ENCODE measurements at regions of chr7 and their contacts with region 1.

Region 1: GRCh38 chr7:24336461-24336860 is 52.5 kb downstream of the NPY start:
- DNase-seq: no peak
- ATAC-seq: no peak
- H3K4me3 ChIP-seq: no peak overlapping the region
- H3K27ac ChIP-seq: no peak overlapping the region
- H3K4me1 ChIP-seq: no peaks in the 10 kb centered on the region
- H3K27me3 ChIP-seq: peaks cover 0 to 15% (median 0%) of the 10 kb centered on the region in 9 donors
- CTCF ChIP-seq: no peak
- POLR2A ChIP-seq: no peak

Region 2: DNA sequence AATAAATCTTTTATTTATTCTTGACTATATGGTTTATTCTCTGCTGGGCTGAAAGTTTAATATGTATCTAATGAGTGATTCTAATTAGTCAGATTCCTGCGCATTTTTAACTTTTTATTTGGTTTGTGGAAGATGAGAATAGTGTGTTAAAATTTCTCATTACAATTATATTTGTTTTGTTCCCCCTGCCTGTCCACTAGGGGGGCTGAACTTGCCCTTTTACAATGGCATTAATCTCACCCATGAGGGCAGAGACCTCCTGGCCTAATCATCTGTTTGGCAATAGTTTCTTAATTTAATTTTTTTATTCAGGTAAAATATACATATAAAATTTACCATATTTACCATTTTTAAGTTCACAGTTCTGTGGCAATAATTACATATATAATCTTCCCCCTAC is 330.9 kb before region 1 on chr7:
- intact Hi-C with region 1: loop called in 1 of 10 experiments (anchors 5 kb)
- DNase-seq: no peak
- ATAC-seq: no peak
- H3K4me3 ChIP-seq: no peak overlapping the region
- H3K27ac ChIP-seq: no peak overlapping the region
- H3K4me1 ChIP-seq: no peaks in the 10 kb centered on the region
- H3K27me3 ChIP-seq: no peaks in the 10 kb centered on the region
- CTCF ChIP-seq: no peak
- POLR2A ChIP-seq: no peak

Region 3: GRCh38 chr7:24279512-24279911 is 56.9 kb before region 1 on chr7:
- intact Hi-C with region 1: loop called in 1 of 10 experiments (anchors 10 kb)
- DNase-seq: no peak
- ATAC-seq: no peak
- H3K4me3 ChIP-seq: no peak overlapping the region
- H3K27ac ChIP-seq: no peak overlapping the region
- H3K4me1 ChIP-seq: peaks cover 0 to 12% (median 0%) of the 10 kb centered on the region in 12 donors
- H3K27me3 ChIP-seq: peaks cover 11 to 53% (median 18%) of the 10 kb centered on the region in 9 donors
- CTCF ChIP-seq: no peak
- POLR2A ChIP-seq: no peak